Mammary epithelial cell (primary cell): ENCODE measurements at regions of chr10 and their contacts with region 1.

Region 1: DNA sequence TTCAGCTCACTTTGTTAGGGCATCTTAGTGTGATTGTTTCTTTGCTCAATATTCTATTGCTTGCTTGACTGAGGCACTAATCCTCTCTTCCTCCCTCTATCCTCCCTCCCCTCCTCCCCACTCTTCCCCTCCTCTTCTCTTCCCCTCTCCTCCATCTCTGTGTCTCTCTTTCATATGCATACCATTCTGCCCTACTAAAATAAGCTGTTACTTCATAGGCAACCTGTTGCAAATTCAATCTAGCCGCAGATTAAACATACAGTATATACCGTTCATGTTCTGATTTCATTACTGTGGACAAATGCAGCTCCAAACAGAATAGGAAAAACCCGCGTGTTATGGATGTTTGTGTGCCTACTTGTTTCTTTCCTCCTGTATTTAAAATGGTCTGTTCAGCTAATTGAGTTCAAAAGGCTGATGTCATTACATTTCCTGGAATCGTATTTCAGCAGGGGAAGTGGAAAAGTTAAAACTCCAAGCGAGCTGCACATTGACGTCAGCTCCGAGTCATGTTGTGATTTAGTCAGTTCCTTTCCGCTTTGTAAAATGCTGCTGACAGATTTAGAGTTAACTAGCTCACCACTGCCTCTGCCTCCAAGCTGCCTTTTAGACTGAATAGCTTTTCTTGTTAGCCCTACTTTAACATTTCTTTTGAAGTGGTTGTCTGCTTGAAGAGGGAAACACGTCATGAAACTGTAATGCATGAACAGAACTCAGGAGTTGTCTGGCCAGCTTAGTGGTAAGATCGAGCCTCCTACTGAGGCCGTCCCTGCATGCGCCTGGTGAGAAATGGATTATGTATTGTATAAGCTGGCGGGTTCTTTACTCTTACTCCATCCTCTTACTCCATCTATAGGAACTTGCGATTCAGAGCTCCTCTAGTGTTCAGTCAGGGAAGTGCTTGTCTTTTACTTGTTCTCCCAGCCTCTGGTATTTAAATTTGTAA is 69.0 kb downstream of the CREM start:
- DNase-seq: peak; percentile 90
- H3K4me3 ChIP-seq: peak overlapping the region; percentile 32 to 50 (median 43)
- H3K27ac ChIP-seq: peak overlapping the region; percentile 69
- H3K4me1 ChIP-seq: peaks cover 18% of the 10 kb centered on the region
- H3K27me3 ChIP-seq: no peaks in the 10 kb centered on the region
- CTCF ChIP-seq: peak; percentile 84 to 90

Region 2: DNA sequence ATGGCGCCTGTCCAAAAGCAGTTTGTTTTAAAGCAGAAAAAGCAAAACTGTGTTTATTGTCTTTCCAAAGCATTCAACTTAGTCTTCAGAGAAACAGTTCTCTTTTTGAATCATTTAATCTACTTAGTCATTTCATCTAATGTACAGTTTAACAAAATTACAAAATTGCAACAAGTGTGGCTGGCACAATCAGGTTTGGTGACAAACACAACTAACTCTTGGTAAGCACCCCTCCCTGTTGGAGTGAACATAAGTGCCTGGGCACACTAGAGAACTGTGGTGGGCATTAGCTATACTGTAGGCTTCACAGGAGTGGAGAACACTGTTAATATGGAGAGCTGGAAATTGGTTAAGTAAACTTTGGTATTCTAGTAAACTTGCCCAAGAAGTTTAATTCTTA is 62.0 kb before region 1 on chr10:
- CTCF ChIA-PET with region 1: interaction called, 13 read pairs
- dilution Hi-C with region 1: no loop called
- in situ Hi-C with region 1: no loop called
- intact Hi-C with region 1: no loop called
- DNase-seq: no peak
- H3K4me3 ChIP-seq: no peak overlapping the region
- H3K27ac ChIP-seq: no peak overlapping the region
- H3K4me1 ChIP-seq: no peaks in the 10 kb centered on the region
- H3K27me3 ChIP-seq: no peaks in the 10 kb centered on the region
- CTCF ChIP-seq: no peak

Region 3: GRCh38 chr10:35172574-35172973 is 23.1 kb before region 1 on chr10:
- CTCF ChIA-PET with region 1: no interaction called
- dilution Hi-C with region 1: no loop called
- in situ Hi-C with region 1: no loop called
- intact Hi-C with region 1: no loop called
- DNase-seq: no peak
- H3K4me3 ChIP-seq: no peak overlapping the region
- H3K27ac ChIP-seq: no peak overlapping the region
- H3K4me1 ChIP-seq: no peaks in the 10 kb centered on the region
- H3K27me3 ChIP-seq: no peaks in the 10 kb centered on the region
- CTCF ChIP-seq: no peak

Region 4: DNA sequence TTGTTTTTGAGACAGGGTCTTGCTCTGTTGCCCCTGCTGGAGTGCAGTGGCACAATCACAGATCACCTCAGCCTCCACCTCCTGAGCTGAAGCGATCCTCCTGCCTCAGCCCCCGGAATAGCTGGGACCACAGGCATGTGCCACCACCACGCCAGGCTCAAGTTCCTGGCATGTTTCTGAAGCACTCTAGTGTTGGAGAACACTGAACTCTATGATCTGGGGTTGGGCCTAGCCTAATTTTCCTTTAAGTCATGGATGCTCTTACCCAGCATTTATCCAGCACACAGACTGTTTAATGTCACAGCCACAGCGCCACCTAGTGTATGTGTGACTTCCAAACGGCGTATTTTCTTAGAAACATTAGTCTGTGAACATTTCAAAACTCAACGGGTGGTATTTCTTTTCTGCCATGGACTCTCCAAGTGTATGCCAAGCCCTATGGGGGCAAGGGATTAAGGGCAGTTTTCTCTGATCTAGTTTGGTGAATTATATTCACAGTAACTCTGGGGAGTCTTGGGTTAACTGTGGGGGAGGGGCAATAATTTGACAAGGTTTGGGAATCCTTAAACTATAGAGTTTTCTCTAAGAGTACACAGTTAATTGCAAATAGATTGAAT is 22.8 kb after region 1 on chr10:
- CTCF ChIA-PET with region 1: no interaction called
- dilution Hi-C with region 1: no loop called
- in situ Hi-C with region 1: no loop called
- intact Hi-C with region 1: no loop called
- DNase-seq: peak; percentile 65
- H3K4me3 ChIP-seq: no peak overlapping the region
- H3K27ac ChIP-seq: no peak overlapping the region
- H3K4me1 ChIP-seq: no peaks in the 10 kb centered on the region
- H3K27me3 ChIP-seq: no peaks in the 10 kb centered on the region
- CTCF ChIP-seq: peak; percentile 74 to 77

Region 5: DNA sequence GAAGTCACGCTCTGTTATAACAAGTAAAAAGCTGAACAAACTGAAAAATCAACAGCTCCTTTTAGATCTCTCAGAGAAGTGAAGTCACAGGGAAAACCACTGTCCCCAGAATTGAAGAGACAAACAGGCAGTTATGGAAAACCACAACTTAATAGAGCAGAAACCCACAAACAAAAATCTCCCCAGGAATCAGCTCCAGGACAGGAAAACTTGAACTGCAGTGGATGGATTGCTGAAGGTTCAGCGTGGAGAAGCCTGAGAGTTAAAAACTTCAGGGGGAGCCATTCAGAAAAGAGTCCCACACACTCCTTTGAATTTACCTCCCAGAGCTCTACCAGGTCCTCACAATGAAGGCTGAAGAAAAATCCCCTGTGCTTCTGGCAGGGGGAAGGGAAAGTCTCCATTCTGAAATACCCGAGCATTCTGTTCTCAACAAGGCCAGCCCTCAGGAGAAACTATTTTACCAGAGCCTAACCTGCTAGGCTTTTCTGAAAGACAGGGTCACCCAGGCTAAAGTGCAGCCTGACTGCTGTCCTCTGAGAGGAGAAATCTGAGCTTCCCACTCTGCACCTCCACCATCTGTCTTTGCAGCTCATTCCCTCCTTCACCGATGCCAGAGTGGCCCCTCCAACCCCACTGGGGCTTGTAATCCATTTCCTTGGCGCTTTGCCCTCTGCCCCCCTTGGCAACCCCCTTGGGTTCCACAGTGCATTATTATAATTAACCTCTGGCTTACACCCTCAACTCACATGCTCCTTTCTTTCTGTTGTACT is 75.6 kb after region 1 on chr10:
- CTCF ChIA-PET with region 1: no interaction called
- dilution Hi-C with region 1: no loop called
- in situ Hi-C with region 1: no loop called
- intact Hi-C with region 1: no loop called
- DNase-seq: no peak
- H3K4me3 ChIP-seq: no peak overlapping the region
- H3K27ac ChIP-seq: no peak overlapping the region
- H3K4me1 ChIP-seq: no peaks in the 10 kb centered on the region
- H3K27me3 ChIP-seq: no peaks in the 10 kb centered on the region
- CTCF ChIP-seq: no peak

Region 6: DNA sequence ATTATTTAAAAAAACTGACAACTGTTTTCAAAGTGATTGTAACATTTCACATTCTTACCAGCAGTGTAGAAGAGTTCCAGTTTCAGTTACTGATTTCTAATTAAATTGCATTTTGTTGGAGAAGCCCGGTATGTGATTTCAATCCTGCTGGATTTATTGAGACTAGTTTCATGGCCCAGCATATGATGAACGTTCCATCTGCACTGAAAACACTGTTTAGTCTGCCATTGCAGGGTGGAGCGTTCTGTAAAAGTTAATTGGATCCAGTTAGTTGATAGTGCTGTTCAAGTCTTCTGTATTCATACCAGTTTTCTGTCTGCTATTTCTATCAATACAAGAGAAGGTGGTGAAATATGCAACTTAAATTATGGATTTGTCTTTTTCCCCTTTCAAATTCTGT is 103.4 kb after region 1 on chr10:
- CTCF ChIA-PET with region 1: no interaction called
- dilution Hi-C with region 1: no loop called
- in situ Hi-C with region 1: no loop called
- intact Hi-C with region 1: no loop called
- DNase-seq: no peak
- H3K4me3 ChIP-seq: no peak overlapping the region
- H3K27ac ChIP-seq: no peak overlapping the region
- H3K4me1 ChIP-seq: peaks cover 8% of the 10 kb centered on the region
- H3K27me3 ChIP-seq: no peaks in the 10 kb centered on the region
- CTCF ChIP-seq: no peak